AG04449 (cell line): ENCODE measurements at regions of chr17 and their contacts with region 1.

Region 1: GRCh38 chr17:27236717-27237315 is 57.1 kb upstream of the WSB1 start:
- DNase-seq: peak; percentile 16
- H3K4me3 ChIP-seq: no peak overlapping the region
- CTCF ChIP-seq: peak; percentile 62

Region 2: GRCh38 chr17:27226615-27227230 is 10.1 kb before region 1 on chr17:
- CTCF ChIA-PET with region 1: interaction called, 47 read pairs
- POLR2A ChIA-PET with region 1: no interaction called
- DNase-seq: peak; percentile 16
- H3K4me3 ChIP-seq: no peak overlapping the region
- CTCF ChIP-seq: no peak

Region 3: DNA sequence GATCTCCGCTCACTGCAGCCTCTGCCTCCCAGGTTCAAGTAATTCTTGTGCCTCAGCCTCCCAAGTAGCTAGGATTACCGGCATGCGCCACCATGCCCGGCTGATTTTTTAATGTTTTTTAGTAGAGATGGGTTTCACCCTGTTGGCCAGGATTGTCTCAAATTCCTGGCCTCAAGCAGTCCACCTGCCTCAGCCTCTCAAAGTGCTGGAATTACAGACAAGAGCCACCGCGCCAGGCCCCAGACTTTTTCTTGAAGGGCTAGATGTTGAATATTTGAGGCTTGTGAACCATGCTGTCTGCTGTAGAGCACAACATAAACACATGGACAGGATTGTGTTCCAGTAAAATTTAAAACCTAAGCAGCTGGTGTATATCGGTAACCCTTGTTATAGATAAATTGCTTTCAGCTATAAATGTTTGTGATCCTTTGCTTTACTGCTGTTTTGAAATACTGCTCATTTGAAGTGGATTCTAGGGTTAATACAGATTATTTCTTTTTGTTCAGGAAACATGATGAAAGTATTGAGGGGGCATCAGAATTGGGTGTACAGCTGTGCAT is 69.5 kb after region 1 on chr17:
- CTCF ChIA-PET with region 1: interaction called, 35 read pairs
- POLR2A ChIA-PET with region 1: no interaction called
- DNase-seq: no peak
- H3K4me3 ChIP-seq: no peak overlapping the region
- CTCF ChIP-seq: no peak

Region 4: DNA sequence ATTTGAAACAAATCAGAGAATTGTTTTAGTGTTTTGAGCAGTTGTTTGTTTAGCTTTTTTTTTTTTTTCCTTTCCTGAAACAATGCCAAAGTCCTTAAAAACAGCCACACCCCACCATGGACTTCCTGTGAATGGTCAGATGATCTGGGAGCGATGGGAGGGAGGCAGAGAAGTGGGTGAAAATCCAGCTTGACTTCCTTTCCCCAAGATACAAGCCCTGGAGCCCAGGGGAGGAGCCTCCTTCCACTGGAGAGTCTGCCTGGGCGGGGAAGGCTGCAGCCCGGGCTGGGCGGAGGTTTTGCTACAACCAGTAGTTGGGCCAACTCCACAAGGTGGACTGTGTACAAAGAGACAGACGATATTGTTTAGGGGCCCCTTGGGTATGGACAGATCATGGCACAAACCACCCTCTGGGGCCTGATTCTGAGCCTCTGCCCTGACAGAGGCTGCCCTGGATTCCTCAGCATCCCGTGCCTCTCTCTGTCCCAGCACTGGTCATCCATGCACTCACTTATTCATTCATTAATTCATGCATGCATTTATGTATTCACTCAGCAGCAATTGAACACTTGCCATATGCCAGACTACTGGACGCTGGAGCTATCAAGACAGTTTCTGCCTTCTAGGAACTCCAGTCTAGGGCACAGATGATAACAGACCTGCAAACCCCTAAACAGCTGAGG is 86.8 kb after region 1 on chr17:
- CTCF ChIA-PET with region 1: interaction called, 269 read pairs
- POLR2A ChIA-PET with region 1: no interaction called
- DNase-seq: no peak
- H3K4me3 ChIP-seq: no peak overlapping the region
- CTCF ChIP-seq: no peak

Region 5: DNA sequence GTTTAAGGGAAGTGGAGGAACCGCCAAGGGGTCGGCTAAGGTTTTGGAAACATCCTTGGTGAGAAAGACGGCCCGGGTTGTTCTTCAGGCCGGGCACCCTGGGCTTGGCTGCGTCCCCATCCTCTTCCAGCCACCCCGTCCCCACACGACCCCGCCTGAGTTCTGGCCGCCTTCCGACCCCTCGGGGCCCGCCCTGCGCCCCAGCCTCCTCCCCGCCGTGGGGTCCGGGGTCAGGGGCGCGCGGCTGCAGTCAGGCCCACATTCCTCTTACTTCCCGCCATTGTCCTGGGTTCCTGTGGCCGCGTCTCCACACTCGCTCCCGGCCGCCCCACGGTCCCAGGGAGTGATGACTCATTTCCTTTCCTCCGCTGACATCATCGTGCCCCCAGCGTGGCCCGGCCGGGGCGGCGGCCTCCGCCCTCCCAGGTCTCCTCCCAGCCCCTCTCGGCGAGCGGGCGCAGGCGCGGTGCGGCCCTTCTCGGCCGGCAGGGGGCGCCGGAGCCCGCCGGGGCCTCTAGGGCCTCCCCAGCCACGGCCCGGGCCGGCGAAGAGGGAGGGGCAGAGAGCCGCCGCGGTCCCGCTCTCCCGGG is 116.7 kb after region 1 on chr17:
- CTCF ChIA-PET with region 1: interaction called, 173 read pairs
- POLR2A ChIA-PET with region 1: no interaction called
- DNase-seq: peak; percentile 19
- H3K4me3 ChIP-seq: peak overlapping the region; percentile 64
- CTCF ChIP-seq: peak; percentile 57

Region 6: DNA sequence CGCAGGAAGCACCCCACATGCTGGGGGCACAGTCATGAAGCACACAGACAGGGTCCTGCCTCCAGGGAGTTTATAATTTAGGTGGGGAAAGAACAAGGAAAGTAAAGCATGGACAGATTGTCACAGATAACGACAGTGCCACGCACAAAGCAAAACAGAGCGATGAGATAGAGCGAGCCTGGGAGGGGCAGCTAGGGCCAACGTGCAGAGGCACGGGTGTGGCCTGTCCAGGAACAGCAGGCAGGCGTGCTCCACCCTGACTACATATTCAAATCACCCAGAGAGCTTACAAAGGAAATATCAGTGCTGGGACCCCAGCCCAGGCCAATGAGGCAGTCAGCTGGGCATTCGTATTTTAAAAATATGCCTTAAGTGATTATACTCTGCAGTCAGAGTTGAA is 410.9 kb after region 1 on chr17:
- CTCF ChIA-PET with region 1: interaction called, 69 read pairs
- POLR2A ChIA-PET with region 1: no interaction called
- DNase-seq: no peak
- H3K4me3 ChIP-seq: no peak overlapping the region
- CTCF ChIP-seq: no peak